ENCODE measurements at regions of chr15 and their contacts with region 1.

Region 1: GRCh38 chr15:74540761-74541493 is at the start of gene ARID3B:
- DNase-seq: peak; percentile 99
- ATAC-seq: peak; percentile 88
- H3K4me3 Mint-ChIP-seq: peak within 1 kb of the TSS; percentile 94
- H3K27ac Mint-ChIP-seq: peak within 1 kb of the TSS; percentile 98
- H3K4me1 Mint-ChIP-seq: peaks cover 43% of the 10 kb centered on the region
- H3K27me3 Mint-ChIP-seq: peaks cover 2% of the 10 kb centered on the region
- total RNA-seq, gene ARID3B: 23.9 to 25.4 TPM

Region 2: DNA sequence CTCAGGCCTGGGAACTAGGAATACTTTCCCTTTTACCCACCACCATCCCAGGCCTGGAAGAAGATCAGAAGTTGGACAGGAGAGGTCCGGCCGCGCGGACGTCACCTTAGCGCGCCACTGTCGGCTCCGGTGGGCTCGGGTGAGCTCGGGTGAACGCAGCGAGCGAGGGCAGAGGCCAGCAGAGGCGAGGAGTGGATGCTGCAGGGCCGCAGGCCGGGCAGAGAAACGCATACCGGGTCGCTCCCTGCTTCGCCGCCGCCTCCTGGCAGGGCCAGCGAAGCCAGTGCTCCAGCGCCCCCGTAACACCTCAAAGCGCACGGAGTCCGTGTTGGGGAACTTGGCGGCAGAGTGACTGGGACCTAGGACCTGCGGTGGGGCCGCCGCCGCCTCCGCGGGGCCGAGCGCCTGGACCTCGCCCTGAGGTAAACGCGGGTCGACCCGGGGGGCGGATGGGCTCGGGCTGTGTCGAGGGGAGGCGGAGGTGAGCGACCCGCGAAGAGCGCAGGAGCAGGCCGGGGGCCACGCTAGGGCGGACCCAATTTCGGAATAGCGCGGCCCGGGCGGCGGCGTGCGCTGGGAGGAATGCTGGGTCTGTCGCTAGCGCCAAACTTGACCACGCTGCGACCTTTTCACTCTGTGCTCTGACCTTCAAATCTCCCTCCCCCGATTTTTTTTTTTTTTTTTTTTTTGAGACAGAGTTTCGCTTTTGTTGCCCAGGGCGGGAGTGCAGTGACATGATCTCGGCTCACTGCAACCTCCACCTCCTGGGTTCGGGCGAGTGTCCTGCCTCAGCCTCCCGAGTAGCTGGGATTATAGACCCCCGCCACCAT is 175.1 kb before region 1 on chr15:
- CTCF ChIA-PET with region 1: no interaction called
- POLR2A ChIA-PET with region 1: no interaction called
- intact Hi-C with region 1: no loop called
- DNase-seq: no peak
- ATAC-seq: peak; percentile 44
- H3K4me3 Mint-ChIP-seq: no peak overlapping the region
- H3K27ac Mint-ChIP-seq: no peak overlapping the region
- H3K4me1 Mint-ChIP-seq: peaks cover 3% of the 10 kb centered on the region
- H3K27me3 Mint-ChIP-seq: peaks cover 32% of the 10 kb centered on the region

Region 3: DNA sequence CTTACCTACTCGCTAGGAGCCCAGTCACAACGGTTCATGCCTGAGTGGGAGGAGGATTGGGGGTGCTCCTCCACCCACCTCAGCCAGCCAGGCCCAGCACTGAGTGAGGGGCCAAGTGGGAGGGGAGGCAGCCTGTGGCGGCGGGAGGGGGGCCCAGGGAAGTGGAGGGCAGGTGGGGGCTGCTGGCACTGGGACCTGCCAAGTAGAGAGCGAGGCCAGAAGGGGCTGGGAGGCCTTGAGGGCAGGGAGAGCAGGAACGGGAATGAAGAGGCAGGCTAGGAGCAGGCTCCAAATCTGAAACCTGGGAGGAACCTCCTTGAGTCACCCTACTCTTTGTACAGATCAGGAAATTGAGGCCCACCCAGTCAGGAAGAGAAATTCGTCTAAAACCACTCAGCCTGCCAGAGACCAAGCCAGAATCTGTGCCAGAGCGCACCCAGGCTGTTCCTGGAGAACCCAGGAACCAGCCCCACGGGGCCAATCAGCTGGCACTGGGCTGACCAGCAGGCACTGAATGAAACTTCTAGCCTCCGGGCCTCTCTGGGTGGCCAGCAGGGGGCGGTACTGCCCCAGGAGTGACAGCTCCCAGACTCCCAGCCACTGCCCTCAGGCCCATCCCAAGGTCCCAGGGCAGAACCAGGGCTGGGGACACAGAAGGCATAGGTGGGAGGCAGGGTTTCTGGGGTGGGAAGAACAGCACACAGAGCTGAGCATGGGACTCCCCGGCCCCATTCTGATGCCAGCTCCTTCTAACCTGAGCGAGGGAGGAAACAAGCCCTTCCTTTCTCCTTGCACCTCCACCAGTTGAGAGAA is 158.7 kb before region 1 on chr15:
- CTCF ChIA-PET with region 1: interaction called, 7 read pairs
- POLR2A ChIA-PET with region 1: no interaction called
- intact Hi-C with region 1: loop called in 1 of 2 experiments (anchors 2 kb)
- DNase-seq: peak; percentile 87
- ATAC-seq: peak; percentile 13
- H3K4me3 Mint-ChIP-seq: no peak overlapping the region
- H3K27ac Mint-ChIP-seq: peak overlapping the region; percentile 97
- H3K4me1 Mint-ChIP-seq: peaks cover 80% of the 10 kb centered on the region
- H3K27me3 Mint-ChIP-seq: no peaks in the 10 kb centered on the region

Region 4: DNA sequence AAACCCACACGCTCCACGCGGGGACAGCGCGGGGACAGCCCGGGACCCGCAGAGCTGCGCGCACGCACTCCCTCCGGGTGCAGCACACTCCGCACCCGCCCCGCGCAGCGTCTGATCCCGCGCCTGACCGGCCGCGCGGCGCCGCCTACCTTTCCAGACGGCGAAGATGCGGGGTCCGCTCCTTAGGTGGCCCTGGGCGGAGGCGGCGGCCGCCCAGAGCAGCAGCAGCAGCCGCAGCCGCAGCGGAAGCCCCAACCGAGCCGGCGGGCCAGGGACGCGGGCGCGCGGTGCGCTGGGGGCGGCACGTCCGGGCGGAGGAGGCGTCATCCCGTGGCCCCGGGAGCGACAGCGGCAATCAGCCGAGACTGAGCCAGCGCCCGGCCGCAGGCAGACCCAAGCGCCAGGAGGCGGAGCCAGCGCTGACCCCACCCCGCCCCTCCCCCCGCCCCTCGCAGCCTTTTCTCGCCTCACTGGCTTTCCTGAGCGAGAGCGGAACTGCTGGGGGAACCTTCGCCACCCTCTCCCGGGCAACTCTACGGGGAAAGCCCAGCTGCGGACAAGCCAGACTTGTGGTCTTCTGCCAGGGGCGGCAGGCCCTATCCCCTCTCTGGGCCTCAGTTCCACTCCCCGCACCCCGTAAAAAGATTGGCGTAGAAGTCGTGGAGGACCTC is 107.2 kb before region 1 on chr15 and contains the start of gene SEMA7A:
- CTCF ChIA-PET with region 1: interaction called, 4 read pairs
- POLR2A ChIA-PET with region 1: no interaction called
- intact Hi-C with region 1: loop called (anchors 1 to 10 kb)
- DNase-seq: peak; percentile 90
- ATAC-seq: peak; percentile 89
- H3K4me3 Mint-ChIP-seq: peak within 1 kb of the TSS; percentile 83
- H3K27ac Mint-ChIP-seq: peak within 1 kb of the TSS; percentile 56
- H3K4me1 Mint-ChIP-seq: peaks cover 59% of the 10 kb centered on the region
- H3K27me3 Mint-ChIP-seq: no peaks in the 10 kb centered on the region
- total RNA-seq, gene SEMA7A: 57.3 to 57.7 TPM

Region 5: GRCh38 chr15:74695597-74696397 is 154.9 kb after region 1 on chr15 and contains the start of gene EDC3:
- CTCF ChIA-PET with region 1: no interaction called
- POLR2A ChIA-PET with region 1: no interaction called
- intact Hi-C with region 1: loop called in 1 of 2 experiments (anchors 1 kb)
- DNase-seq: peak; percentile 92
- ATAC-seq: peak; percentile 91
- H3K4me3 Mint-ChIP-seq: peak within 1 kb of the TSS; percentile 98
- H3K27ac Mint-ChIP-seq: peak within 1 kb of the TSS; percentile 99
- H3K4me1 Mint-ChIP-seq: peaks cover 27% of the 10 kb centered on the region
- H3K27me3 Mint-ChIP-seq: no peaks in the 10 kb centered on the region
- total RNA-seq, gene EDC3: 44.7 to 45.0 TPM

Region 6: GRCh38 chr15:74873036-74873755 is 332.3 kb after region 1 on chr15 and contains the start of gene SCAMP2:
- CTCF ChIA-PET with region 1: no interaction called
- POLR2A ChIA-PET with region 1: no interaction called
- intact Hi-C with region 1: loop called in 1 of 2 experiments (anchors 1 kb)
- DNase-seq: peak; percentile 94
- ATAC-seq: peak; percentile 84
- H3K4me3 Mint-ChIP-seq: peak within 1 kb of the TSS; percentile 87
- H3K27ac Mint-ChIP-seq: peak within 1 kb of the TSS; percentile 87
- H3K4me1 Mint-ChIP-seq: peaks cover 48% of the 10 kb centered on the region
- H3K27me3 Mint-ChIP-seq: no peaks in the 10 kb centered on the region
- total RNA-seq, gene SCAMP2: 61.6 to 83.4 TPM

Region 7: GRCh38 chr15:75578948-75579920 is 1038.3 kb after region 1 on chr15 and contains the start of gene PTPN9:
- CTCF ChIA-PET with region 1: no interaction called
- POLR2A ChIA-PET with region 1: no interaction called
- intact Hi-C with region 1: loop called in 1 of 2 experiments (anchors 5 kb)
- DNase-seq: peak; percentile 88
- ATAC-seq: peak; percentile 80
- H3K4me3 Mint-ChIP-seq: peak within 1 kb of the TSS; percentile 87
- H3K27ac Mint-ChIP-seq: peak within 1 kb of the TSS; percentile 94
- H3K4me1 Mint-ChIP-seq: peaks cover 13% of the 10 kb centered on the region
- H3K27me3 Mint-ChIP-seq: no peaks in the 10 kb centered on the region
- total RNA-seq, gene PTPN9: 15.0 to 16.5 TPM